Activated CD4-positive, alpha-beta T cell treated with anti-CD3 and anti-CD28 coated beads, Interleukin-2, amount 10 ng/mL, durations not matched to agents 7 days and 5 days (primary cell): ENCODE measurements at regions of chr11 and their contacts with region 1.

Region 1: DNA sequence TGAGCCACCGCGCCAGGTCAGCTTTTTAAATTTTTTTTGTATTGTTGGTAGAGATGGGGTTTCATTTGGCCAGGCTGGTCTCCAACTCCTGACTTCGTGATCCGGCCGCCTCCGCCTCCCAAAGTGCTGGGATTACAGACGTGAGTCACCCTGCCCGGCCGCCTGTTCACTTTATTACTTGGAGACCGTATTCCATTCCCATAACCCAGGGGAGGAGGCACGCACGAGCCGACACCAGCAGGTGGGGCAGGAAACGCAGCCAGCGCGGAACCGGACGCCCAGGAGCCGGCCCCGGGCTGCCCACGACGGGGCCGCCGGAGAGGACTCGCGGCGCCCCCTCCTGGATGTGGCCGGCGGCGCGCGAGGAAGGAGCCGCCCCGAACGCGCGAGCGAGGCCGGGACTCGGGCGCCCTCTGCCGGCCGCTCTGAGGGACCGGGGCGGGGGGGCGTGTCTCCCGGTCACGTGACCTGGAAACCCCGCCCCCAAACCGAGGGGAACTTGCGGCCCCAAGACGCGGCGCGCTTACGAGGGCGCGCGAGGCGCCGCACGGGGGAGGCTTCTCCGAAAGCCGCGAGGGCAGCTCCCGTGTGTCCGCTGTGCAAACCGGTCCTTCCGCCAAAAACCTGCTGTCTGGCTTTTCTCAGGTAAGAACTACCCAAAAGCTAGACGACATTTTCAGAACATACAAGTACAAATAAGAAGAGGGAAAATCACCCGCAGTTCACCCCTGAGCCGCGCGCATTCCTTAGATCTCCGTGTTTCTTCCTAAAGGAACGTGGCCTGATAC is 11.6 kb upstream of the RNH1 start:
- DNase-seq: peak; percentile 86
- H3K4me3 Mint-ChIP-seq: peak overlapping the region; percentile 64
- H3K27ac Mint-ChIP-seq: no peak overlapping the region
- H3K4me1 Mint-ChIP-seq: peaks cover 10% of the 10 kb centered on the region
- H3K27me3 Mint-ChIP-seq: no peaks in the 10 kb centered on the region

Region 2: DNA sequence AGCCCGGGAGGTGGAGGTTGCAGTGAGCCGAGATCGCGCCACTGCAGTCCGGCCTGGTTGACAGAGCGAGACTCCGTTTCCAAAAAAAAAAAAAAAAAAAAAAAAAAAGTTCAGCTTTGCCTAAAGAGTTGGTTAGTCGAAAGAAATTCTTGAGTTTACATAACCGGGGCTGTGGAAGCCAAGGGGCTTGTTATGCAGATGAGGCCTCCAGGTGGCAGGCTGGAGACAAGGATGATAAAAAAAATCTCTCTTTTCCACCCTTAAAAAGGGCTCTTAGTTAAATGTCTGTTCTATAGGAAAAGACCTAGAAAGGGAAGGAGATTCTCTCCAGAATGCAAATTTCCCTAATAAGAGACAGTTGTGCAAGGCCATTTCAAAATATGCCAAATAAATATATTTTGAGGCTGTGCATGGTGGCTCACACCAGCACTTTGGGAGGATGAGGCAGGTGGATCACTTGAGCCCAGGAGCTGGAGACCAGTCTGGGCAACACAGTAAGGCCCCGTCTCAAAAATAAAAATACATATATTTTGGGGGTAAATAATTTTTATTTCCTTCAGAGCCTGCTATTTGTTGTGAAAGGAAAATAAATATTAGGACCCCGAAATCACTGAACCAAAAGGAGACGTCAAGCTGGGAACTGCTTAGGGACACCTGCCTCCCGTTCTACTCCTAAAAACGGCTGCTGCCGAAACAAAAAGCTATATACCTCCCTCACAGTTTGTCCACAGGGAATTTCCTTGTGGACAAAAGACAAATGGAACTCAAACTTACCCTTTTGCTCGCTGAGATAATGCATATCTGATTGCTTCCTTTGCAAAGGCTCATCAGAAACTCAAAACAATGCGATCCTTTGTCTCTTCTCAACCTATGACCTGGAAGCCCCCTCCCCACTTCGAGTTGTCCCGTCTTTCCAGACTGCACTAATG is 213.5 kb before region 1 on chr11:
- CTCF ChIA-PET with region 1: interaction called, 13 read pairs
- POLR2A ChIA-PET with region 1: no interaction called
- DNase-seq: peak; percentile 74
- H3K4me3 Mint-ChIP-seq: no peak overlapping the region
- H3K27ac Mint-ChIP-seq: peak overlapping the region; percentile 58
- H3K4me1 Mint-ChIP-seq: peaks cover 42% of the 10 kb centered on the region
- H3K27me3 Mint-ChIP-seq: peaks cover under 1% of the 10 kb centered on the region

Region 3: DNA sequence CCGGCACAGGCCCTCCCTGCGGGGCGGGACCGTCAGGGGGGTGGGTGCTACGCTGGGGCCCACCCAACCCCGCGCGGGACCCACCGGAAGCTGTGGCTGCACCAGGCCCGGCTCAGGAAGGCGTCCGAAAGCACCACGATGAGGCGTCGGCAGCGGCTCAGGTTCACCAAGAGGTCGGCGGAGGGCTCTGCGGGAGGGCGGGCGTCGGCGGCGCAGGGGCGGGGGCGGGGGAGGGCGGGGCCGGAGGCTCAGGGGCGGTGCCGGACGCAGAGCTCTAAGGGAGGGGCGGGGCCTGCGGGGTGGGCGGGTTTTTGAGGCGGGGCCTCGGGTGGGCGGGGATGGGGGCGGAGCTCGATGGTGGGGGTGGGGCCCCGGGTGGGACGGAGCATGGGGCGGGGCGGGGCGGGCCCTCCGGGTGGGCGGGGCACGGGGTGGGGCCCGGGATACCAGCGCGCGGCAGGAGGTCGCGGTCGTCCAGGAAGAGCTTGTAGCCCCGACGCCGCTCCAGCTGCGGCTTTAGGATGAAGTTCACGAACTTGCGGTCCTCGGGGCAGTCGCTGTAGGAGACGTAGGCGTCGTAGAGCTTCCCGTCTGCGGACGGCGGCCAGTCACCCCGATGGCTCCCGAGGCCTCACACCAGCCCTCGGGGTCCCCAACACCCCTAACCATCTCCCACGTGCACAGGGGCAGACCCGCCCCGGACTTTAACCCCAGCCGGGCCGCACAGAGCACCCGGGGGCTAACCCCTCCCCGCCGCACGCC is 111.5 kb before region 1 on chr11:
- CTCF ChIA-PET with region 1: interaction called, 16 read pairs
- POLR2A ChIA-PET with region 1: no interaction called
- DNase-seq: peak; percentile 93
- H3K4me3 Mint-ChIP-seq: no peak overlapping the region
- H3K27ac Mint-ChIP-seq: peak overlapping the region; percentile 57
- H3K4me1 Mint-ChIP-seq: peaks cover 12% of the 10 kb centered on the region
- H3K27me3 Mint-ChIP-seq: no peaks in the 10 kb centered on the region

Region 4: DNA sequence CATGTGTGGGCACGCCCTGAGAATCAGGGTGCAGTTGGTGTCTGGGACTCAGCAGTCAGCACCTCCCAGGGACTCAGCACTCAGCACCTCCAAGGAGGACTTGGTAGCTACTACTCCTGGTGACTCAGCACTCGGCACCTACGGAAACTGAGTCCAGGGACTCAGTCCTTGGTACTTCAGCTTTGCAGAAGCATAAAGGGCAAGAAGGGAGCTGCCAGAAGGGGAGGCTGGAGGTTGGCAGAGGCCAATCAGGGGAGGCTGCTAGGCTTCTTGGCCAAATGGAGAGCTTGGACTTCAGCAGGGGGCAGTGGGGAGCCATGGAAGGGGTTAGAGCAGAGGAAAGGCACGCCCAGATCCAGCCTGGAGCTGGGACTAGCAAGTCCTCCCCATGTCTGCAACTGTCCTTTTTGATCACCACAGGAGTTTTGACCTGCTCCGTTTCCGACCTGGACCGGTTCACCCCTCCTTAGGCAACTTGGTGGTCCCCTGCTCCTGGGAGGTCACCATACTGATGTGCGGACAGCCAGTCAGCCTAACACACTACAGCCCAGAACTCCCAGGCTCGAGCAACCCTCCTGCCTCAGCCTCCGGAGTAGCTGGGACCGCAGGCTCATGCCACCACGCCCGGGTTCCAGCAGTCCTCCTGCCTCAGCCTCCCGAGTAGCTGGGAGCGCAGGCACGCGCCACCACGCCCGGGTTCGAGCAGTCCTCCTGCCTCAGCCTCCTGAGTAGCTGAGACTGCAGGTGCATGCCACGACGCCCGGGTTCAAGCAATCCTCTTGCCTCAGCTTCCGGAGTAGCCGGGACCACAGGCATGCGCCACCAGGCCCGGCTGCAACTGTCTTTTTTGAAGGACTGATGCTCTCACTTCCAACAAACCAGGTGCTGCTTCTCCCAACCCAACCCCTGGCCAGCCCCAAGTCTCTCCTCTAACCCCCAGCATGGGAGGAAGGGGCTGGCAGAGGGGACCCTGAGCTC is 78.3 kb before region 1 on chr11:
- CTCF ChIA-PET with region 1: interaction called, 15 read pairs
- POLR2A ChIA-PET with region 1: no interaction called
- DNase-seq: no peak
- H3K4me3 Mint-ChIP-seq: peak overlapping the region; percentile 73
- H3K27ac Mint-ChIP-seq: no peak overlapping the region
- H3K4me1 Mint-ChIP-seq: peaks cover 40% of the 10 kb centered on the region
- H3K27me3 Mint-ChIP-seq: peaks cover 8% of the 10 kb centered on the region

Region 5: DNA sequence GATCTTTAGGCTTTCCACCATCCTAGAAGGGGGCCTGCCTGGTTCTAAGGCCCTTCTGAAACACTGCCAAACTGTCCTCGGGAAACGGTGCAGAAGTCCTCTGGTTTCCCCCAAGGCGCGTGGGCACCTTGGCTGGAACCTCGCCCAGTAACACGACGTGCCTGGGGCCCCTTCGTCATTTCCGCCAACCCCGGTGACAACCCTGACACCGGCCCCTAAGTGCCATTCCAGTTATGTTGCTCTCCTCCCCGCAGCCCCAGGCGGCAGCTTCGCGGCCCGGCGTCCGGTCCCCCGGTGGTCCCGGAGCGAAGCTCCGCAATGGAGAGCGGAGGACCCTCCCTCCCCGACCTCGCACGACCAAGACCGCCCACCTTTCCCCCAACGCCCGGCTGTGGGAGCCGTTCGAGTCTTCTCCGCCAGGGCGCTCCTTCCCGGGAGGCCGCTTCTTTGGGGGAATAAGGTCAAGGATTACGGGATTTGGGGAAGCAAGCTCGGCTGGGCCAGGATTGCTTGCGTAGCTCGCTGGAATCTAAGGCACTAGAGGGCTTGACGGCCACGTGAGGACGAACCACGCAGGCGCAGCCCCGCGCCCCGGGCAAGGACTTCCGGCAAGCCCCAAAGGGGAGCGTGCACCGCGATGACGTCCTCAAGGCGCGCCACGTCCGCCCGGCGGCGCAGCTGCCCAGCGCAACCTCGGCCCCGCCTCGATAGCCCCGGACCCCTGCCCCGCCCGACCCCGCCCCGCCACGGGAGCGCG is 12.2 kb before region 1 on chr11:
- CTCF ChIA-PET with region 1: interaction called, 64 read pairs
- POLR2A ChIA-PET with region 1: no interaction called
- DNase-seq: peak; percentile 97
- H3K4me3 Mint-ChIP-seq: peak overlapping the region; percentile 95
- H3K27ac Mint-ChIP-seq: peak overlapping the region; percentile 98
- H3K4me1 Mint-ChIP-seq: peaks cover 26% of the 10 kb centered on the region
- H3K27me3 Mint-ChIP-seq: no peaks in the 10 kb centered on the region

Region 6: GRCh38 chr11:554824-555472 is 36.3 kb after region 1 on chr11:
- CTCF ChIA-PET with region 1: interaction called, 10 read pairs
- POLR2A ChIA-PET with region 1: no interaction called
- DNase-seq: peak; percentile 74
- H3K4me3 Mint-ChIP-seq: no peak overlapping the region
- H3K27ac Mint-ChIP-seq: no peak overlapping the region
- H3K4me1 Mint-ChIP-seq: peaks cover 7% of the 10 kb centered on the region
- H3K27me3 Mint-ChIP-seq: peaks cover 20% of the 10 kb centered on the region